CD8-positive, alpha-beta memory T cell (primary cell): ENCODE measurements at regions of chr19 and their contacts with region 1.

Region 1: DNA sequence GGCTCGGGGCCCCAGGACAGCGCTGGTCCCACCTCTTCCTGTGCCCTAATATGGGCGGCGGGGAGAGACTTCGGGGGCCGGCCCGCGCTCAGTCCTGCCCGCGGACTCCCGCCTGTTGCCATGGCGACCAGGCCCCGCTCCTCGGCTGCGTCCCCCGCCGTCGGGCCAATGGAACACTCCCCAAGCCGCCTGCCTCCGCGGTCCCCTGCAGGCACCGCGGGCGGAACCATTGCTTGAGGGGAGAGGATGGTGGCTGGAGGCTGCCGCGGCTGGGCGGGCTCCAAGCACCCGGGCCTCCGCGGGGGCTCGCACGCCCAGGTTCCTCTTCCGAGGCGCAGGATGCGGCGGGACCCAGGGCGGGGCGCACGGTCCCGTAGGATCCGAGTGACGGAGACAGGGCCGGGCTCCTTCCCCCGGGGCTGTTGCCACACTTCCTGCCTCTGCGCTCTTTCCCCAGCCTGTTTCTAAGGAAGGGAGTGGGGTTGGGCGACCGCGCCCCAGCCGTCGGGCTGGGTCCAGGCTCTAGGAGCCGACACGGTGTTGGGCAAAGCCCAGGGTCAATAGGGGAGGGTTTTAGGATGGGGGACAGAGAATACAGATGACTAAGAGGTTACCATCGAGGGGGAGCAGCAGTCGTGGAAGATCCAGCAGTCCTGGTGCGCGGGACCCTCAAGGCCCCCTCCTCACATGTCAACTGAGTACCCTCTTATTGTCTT is 1.2 kb upstream of the JUNB start:
- DNase-seq: peak; percentile 89 to 96 (median 93)
- H3K4me3 ChIP-seq: peak overlapping the region; percentile 92
- H3K4me3 Mint-ChIP-seq: peak overlapping the region; percentile 90 to 100 (median 96)
- H3K27ac ChIP-seq: peak overlapping the region; percentile 99
- H3K27ac Mint-ChIP-seq: peak overlapping the region; percentile 91 to 100 (median 99)
- H3K4me1 ChIP-seq: peaks cover 41% of the 10 kb centered on the region
- H3K4me1 Mint-ChIP-seq: peaks cover 25 to 41% (median 28%) of the 10 kb centered on the region in 3 donors
- H3K27me3 ChIP-seq: no peaks in the 10 kb centered on the region
- H3K27me3 Mint-ChIP-seq: peaks cover 0 to 30% of the 10 kb centered on the region in 2 donors

Region 2: GRCh38 chr19:12696366-12697335 is 93.4 kb before region 1 on chr19 and contains the start of gene FBXW9:
- CTCF ChIA-PET with region 1: no interaction called
- POLR2A ChIA-PET with region 1: no interaction called
- DNase-seq: peak; percentile 91 to 98 (median 96)
- H3K4me3 ChIP-seq: peak within 1 kb of the TSS; percentile 58
- H3K4me3 Mint-ChIP-seq: peak within 1 kb of the TSS; percentile 87 to 98 (median 92)
- H3K27ac ChIP-seq: peak within 1 kb of the TSS; percentile 79
- H3K27ac Mint-ChIP-seq: peak within 1 kb of the TSS; percentile 93 to 99 (median 96)
- H3K4me1 ChIP-seq: peaks cover 12% of the 10 kb centered on the region
- H3K4me1 Mint-ChIP-seq: peaks cover 10 to 15% (median 12%) of the 10 kb centered on the region in 3 donors
- H3K27me3 ChIP-seq: no peaks in the 10 kb centered on the region
- H3K27me3 Mint-ChIP-seq: peaks cover 0 to 3% of the 10 kb centered on the region in 2 donors
- total RNA-seq, gene FBXW9: 7.9 to 8.1 TPM

Region 3: GRCh38 chr19:12777217-12778016 is 12.6 kb before region 1 on chr19:
- CTCF ChIA-PET with region 1: interaction called, 483 read pairs
- POLR2A ChIA-PET with region 1: interaction called, 167 read pairs
- DNase-seq: peak; percentile 74 to 86 (median 78)
- H3K4me3 ChIP-seq: peak overlapping the region; percentile 92
- H3K4me3 Mint-ChIP-seq: peak overlapping the region; percentile 81 to 94 (median 85)
- H3K27ac ChIP-seq: peak overlapping the region; percentile 61
- H3K27ac Mint-ChIP-seq: peak overlapping the region; percentile 78 to 98 (median 94)
- H3K4me1 ChIP-seq: peaks cover 39% of the 10 kb centered on the region
- H3K4me1 Mint-ChIP-seq: peaks cover 27 to 51% (median 30%) of the 10 kb centered on the region in 3 donors
- H3K27me3 ChIP-seq: no peaks in the 10 kb centered on the region
- H3K27me3 Mint-ChIP-seq: peaks cover 0 to 2% of the 10 kb centered on the region in 2 donors

Region 4: GRCh38 chr19:12806239-12807081 is 16.4 kb after region 1 on chr19 and contains the start of gene RNASEH2A:
- CTCF ChIA-PET with region 1: interaction called, 3 read pairs
- POLR2A ChIA-PET with region 1: interaction called, 21 read pairs
- DNase-seq: peak; percentile 79 to 88 (median 81)
- H3K4me3 ChIP-seq: peak within 1 kb of the TSS; percentile 59
- H3K4me3 Mint-ChIP-seq: peak within 1 kb of the TSS; percentile 89 to 95 (median 92)
- H3K27ac ChIP-seq: peak within 1 kb of the TSS; percentile 75
- H3K27ac Mint-ChIP-seq: peak within 1 kb of the TSS; percentile 66 to 94 (median 88)
- H3K4me1 ChIP-seq: peaks cover 20% of the 10 kb centered on the region
- H3K4me1 Mint-ChIP-seq: peaks cover 18 to 25% (median 21%) of the 10 kb centered on the region in 3 donors
- H3K27me3 ChIP-seq: no peaks in the 10 kb centered on the region
- H3K27me3 Mint-ChIP-seq: peaks cover 0 to 4% of the 10 kb centered on the region in 2 donors
- total RNA-seq, gene RNASEH2A: 51.5 to 62.4 TPM

Region 5: GRCh38 chr19:12945479-12946091 is 155.5 kb after region 1 on chr19 and contains the start of gene RAD23A:
- CTCF ChIA-PET with region 1: no interaction called
- POLR2A ChIA-PET with region 1: no interaction called
- DNase-seq: peak; percentile 98 to 99 (median 98)
- H3K4me3 ChIP-seq: peak within 1 kb of the TSS; percentile 73
- H3K4me3 Mint-ChIP-seq: peak within 1 kb of the TSS; percentile 87 to 96 (median 91)
- H3K27ac ChIP-seq: peak within 1 kb of the TSS; percentile 74
- H3K27ac Mint-ChIP-seq: peak within 1 kb of the TSS; percentile 95 to 98 (median 96)
- H3K4me1 ChIP-seq: peaks cover 31% of the 10 kb centered on the region
- H3K4me1 Mint-ChIP-seq: peaks cover 34 to 62% (median 38%) of the 10 kb centered on the region in 3 donors
- H3K27me3 ChIP-seq: no peaks in the 10 kb centered on the region
- H3K27me3 Mint-ChIP-seq: peaks cover 0 to 6% of the 10 kb centered on the region in 2 donors
- total RNA-seq, gene RAD23A: 227 to 230 TPM